ENCODE measurements at regions of chr5 and their contacts with region 1.

Region 1: GRCh38 chr5:154647114-154647760 is 107.9 kb upstream of the LARP1 start:
- DNase-seq: no peak
- ATAC-seq: peak; percentile 74

Region 2: GRCh38 chr5:154714266-154714986 is 67.2 kb after region 1 on chr5:
- intact Hi-C with region 1: no loop called
- DNase-seq: no peak
- ATAC-seq: no peak

Region 3: DNA sequence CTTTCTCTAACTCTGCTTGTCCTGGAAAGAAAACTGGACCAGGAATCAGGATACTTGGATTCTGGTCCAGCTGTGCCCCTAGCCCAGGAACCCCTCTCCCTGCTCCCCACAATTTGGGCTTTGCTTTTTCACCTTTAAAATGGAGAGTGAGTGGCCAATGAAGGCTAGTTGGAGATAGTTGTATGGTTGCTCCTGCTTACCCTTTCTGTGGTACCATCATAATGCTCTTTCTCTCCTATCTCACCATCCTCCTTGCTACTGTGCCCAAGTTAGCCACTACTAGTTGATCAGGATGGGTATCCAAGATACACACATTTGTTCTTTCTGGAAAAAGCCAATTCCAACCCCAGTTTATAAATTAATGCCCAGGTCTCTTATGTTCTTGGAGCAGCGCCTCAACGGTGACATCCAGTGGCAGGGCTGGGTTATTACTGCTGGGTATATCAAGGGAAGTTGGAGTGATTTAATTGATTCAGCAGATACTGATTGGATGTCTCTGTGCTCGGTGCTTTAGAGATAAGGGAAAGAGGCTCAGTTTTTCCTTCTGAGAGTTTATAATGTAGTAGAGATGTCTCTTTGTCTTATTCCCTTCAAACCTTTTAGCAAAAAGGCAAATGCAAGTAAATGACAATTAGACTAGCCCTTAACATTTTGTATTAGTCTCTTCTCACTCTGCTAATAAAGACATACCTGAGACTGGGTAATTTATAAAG is 164.6 kb after region 1 on chr5:
- intact Hi-C with region 1: loop called (anchors 1 kb)
- DNase-seq: no peak
- ATAC-seq: peak; percentile 70

Measured in Right ventricle myocardium inferior (tissue), 1 donor.